ENCODE measurements at regions of chr5 and their contacts with region 1.

Region 1: GRCh38 chr5:133944263-133945185 is 23.9 kb downstream of the C5orf15 start:
- DNase-seq: peak; percentile 82
- ATAC-seq: peak; percentile 67
- H3K4me3 ChIP-seq: no peak overlapping the region
- H3K27ac ChIP-seq: no peak overlapping the region
- H3K4me1 ChIP-seq: peaks cover 10% of the 10 kb centered on the region
- H3K27me3 ChIP-seq: no peaks in the 10 kb centered on the region
- CTCF ChIP-seq: peak; percentile 80

Region 2: GRCh38 chr5:133423618-133424282 is 520.8 kb before region 1 on chr5:
- CTCF ChIA-PET with region 1: no interaction called
- POLR2A ChIA-PET with region 1: no interaction called
- intact Hi-C with region 1: loop called (anchors 5 kb)
- DNase-seq: peak; percentile 48
- ATAC-seq: peak; percentile 88
- H3K4me3 ChIP-seq: no peak overlapping the region
- H3K27ac ChIP-seq: no peak overlapping the region
- H3K4me1 ChIP-seq: no peaks in the 10 kb centered on the region
- H3K27me3 ChIP-seq: no peaks in the 10 kb centered on the region
- CTCF ChIP-seq: peak; percentile 84

Region 3: DNA sequence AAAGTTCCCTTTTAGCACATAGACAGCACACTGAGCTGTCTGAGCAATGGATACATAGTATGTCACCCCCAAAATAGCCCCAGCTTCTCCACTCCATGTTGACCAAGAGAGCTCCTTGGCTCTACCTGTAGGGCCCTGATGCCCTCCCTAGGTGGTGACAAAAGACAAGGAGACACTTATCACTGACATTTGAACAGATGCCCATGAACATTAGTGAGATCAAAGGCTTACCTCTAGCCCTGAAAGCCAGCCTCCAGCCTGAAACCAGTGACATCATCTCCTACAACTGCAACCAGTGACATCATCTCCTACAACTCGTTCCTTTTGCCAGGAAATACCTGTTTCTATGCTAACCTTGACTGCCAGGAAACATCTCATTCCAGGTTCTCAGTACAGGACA is 454.9 kb before region 1 on chr5:
- CTCF ChIA-PET with region 1: no interaction called
- POLR2A ChIA-PET with region 1: no interaction called
- intact Hi-C with region 1: loop called (anchors 1 kb)
- DNase-seq: peak; percentile 56
- ATAC-seq: peak; percentile 56; the same call in 1 of the 2 replicates
- H3K4me3 ChIP-seq: no peak overlapping the region
- H3K27ac ChIP-seq: no peak overlapping the region
- H3K4me1 ChIP-seq: no peaks in the 10 kb centered on the region
- H3K27me3 ChIP-seq: no peaks in the 10 kb centered on the region
- CTCF ChIP-seq: peak; percentile 61

Region 4: DNA sequence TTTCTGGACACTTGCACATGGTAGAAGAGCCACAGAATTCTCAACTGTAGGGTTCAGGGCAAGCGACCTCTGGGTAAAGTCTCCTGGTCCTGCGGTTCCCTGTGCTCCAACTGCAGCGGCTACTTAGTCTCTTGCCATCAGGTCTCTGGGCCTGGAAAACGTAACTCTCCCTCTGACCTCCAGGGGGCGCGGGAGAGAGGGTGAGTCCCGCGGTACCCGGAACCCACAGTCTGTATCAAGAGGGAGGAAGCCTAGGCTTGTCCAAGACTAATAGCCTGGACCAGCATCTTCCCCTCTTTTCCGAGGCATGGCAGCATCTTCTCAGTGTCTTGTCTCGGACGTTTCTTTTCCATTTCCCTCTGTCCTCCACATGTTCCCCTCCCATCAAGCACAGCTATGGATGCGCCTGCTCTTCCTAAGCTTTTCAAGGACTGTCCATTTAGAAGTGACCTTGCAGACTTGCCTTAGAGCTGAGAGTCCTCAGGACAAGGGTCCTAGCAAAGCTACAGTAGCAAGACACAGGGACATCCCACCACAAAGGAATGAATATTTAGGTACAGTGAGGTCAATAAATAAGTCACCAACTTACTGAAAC is 391.5 kb before region 1 on chr5:
- CTCF ChIA-PET with region 1: no interaction called
- POLR2A ChIA-PET with region 1: no interaction called
- intact Hi-C with region 1: loop called (anchors 1 kb)
- DNase-seq: peak; percentile 63
- ATAC-seq: peak; percentile 78
- H3K4me3 ChIP-seq: no peak overlapping the region
- H3K27ac ChIP-seq: no peak overlapping the region
- H3K4me1 ChIP-seq: no peaks in the 10 kb centered on the region
- H3K27me3 ChIP-seq: no peaks in the 10 kb centered on the region
- CTCF ChIP-seq: peak; percentile 73

Measured in PC-3 (cell line).